Activated CD8-positive, alpha-beta T cell treated with anti-CD3 and anti-CD28 coated beads for 36 hours (primary cell): ENCODE measurements at regions of chr11 and their contacts with region 1.

Region 1: DNA sequence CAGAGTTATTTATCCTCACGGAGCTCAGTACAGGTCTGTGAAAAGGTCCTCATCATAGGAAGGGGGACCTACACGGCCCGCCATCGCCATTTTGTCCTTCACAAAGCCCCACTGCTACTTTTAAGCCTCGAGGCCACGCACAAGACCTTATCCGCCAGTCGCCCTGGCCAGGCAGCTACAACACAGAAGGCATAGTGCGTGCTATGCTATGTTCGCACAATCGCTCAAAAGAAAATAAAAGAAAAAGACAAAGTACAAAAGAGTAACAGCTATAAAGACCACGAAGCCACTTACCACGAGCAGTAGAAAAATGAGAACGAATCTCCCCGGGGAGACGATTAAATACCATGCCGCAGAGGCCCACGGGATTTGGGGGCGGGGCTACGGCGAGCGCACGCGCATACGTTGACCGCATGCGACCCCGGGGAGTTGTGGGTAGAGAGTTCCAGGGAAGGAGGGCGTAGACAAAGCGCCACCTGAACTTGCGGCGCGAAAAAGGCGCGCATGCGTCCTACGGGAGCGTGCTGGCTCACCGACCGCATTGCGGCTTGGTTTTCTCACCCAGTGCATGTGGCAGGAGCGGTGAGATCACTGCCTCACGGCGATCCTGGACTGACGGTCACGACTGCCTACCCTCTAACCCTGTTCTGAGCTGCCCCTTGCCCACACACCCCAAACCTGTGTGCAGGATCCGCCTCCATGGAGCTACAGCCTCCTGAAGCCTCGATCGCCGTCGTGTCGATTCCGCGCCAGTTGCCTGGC is 16.4 kb upstream of the WDR74 start:
- DNase-seq: peak; percentile 98
- ATAC-seq: peak; percentile 89
- H3K4me3 Mint-ChIP-seq: peak overlapping the region; percentile 95
- H3K27ac Mint-ChIP-seq: peak overlapping the region; percentile 95
- H3K4me1 Mint-ChIP-seq: peaks cover 46% of the 10 kb centered on the region
- H3K27me3 Mint-ChIP-seq: no peaks in the 10 kb centered on the region
- CTCF ChIP-seq: no peak

Region 2: DNA sequence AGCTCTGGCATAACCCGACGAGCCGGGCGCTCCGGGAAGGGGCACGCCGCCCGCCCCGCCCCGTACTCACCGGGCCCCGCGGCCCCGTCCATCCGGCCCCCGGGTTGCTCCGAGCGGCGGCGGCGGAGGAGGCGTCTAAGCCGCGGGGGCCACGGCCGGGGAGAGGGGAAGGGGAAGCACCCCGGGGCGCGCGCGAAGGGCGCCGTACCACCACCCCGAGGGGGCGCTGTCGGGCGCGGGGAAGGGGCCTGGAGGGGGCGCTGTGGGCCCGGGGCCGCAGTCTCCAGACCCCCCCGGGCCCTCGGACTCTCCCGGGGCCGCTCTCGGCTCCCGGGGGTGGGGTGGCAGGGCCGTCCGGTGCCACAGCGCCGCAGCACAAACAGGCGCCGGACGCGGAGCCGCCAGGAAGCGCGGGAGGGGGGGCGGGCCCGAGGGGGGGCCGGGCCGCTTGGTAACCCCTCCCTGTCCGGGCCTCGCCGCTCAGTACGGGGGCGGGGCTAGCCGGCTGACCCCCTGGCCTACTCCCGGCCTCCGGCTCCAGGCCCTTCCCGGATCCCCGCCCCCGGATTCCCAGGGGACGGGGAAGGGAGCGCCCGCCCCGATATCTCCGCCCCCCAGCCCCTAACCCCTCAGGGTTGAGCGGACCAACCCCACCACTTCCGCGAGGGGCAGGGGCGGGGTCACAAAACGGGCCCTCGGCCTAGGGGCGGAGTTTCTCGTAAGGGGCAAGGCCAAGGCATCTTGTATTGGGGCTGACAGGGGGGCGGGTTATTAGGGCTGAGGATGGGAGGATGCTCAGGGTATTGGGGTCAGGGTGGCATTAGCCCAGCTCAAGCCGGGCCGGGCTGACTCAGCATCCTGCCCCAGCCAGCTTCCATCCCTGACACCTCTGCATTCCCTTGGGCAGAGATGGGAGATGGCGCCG is 243.1 kb before region 1 on chr11 and contains the starts of genes EML3 and ROM1:
- CTCF ChIA-PET with region 1: no interaction called
- POLR2A ChIA-PET with region 1: interaction called, 18 read pairs
- intact Hi-C with region 1: no loop called
- DNase-seq: peak; percentile 92
- ATAC-seq: peak; percentile 80
- H3K4me3 Mint-ChIP-seq: peak within 1 kb of the TSS; percentile 96
- H3K27ac Mint-ChIP-seq: peak within 1 kb of the TSS; percentile 97
- H3K4me1 Mint-ChIP-seq: peaks cover 52% of the 10 kb centered on the region
- H3K27me3 Mint-ChIP-seq: no peaks in the 10 kb centered on the region
- CTCF ChIP-seq: peak; percentile 99
- total RNA-seq, gene EML3: 115 to 120 TPM
- total RNA-seq, gene ROM1: 0.79 to 1.1 TPM

Region 3: DNA sequence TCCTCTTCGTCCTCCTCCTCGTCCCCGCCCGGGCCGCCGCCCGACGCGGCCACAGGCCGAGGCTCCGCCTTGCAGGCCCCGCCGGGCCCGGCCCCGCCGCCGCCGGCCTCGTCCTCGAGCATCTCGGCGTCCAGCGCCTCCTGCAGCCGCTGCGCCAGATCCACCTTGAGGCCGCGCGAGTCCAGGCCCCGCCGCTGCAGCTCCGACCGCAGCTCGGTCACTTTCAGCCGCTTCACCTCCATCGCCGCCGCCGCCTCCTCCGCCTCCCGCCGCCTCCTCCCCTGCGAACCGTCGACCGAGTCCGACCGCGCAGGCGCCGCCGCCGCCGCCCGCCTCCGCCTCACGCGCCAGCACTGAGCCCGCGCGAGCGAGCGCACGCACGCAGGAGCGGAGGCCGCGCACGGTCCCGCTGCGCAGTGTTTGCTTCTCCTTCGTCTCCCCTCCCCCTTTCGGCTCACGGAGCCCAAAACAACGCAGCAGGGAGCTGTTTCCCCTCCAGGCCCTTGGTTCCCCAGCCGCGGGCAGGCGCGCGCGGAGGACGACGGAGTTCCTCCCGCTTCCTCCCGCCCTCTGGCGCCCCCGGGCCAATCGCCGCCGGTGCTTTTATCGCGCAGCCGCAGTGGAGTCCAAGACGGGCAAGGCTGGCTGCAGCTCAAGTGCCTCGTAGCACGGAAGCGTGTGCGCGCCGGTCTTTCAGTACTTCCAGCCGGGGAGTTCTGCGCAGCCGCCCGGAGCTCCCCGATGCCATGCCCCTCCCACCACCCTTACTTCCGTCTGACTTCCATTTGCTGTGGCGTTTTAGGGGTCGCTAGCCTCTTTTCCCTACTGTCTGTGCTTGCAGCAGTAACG is 128.6 kb before region 1 on chr11 and contains the start of gene HNRNPUL2:
- CTCF ChIA-PET with region 1: no interaction called
- POLR2A ChIA-PET with region 1: interaction called, 75 read pairs
- intact Hi-C with region 1: no loop called
- DNase-seq: peak; percentile 98
- ATAC-seq: peak; percentile 92
- H3K4me3 Mint-ChIP-seq: peak within 1 kb of the TSS; percentile 95
- H3K27ac Mint-ChIP-seq: peak within 1 kb of the TSS; percentile 99
- H3K4me1 Mint-ChIP-seq: peaks cover 43% of the 10 kb centered on the region
- H3K27me3 Mint-ChIP-seq: no peaks in the 10 kb centered on the region
- CTCF ChIP-seq: no peak
- total RNA-seq, gene HNRNPUL2: 54.9 to 58.6 TPM

Region 4: GRCh38 chr11:62777389-62777788 is 78.4 kb before region 1 on chr11:
- CTCF ChIA-PET with region 1: no interaction called
- POLR2A ChIA-PET with region 1: interaction called, 38 read pairs
- intact Hi-C with region 1: no loop called
- DNase-seq: peak; percentile 43
- ATAC-seq: peak; percentile 76
- H3K4me3 Mint-ChIP-seq: peak overlapping the region; percentile 1
- H3K27ac Mint-ChIP-seq: peak overlapping the region; percentile 85
- H3K4me1 Mint-ChIP-seq: peaks cover 16% of the 10 kb centered on the region
- H3K27me3 Mint-ChIP-seq: no peaks in the 10 kb centered on the region
- CTCF ChIP-seq: no peak

Region 5: GRCh38 chr11:62799486-62799885 is 56.3 kb before region 1 on chr11:
- CTCF ChIA-PET with region 1: no interaction called
- POLR2A ChIA-PET with region 1: interaction called, 88 read pairs
- intact Hi-C with region 1: no loop called
- DNase-seq: no peak
- ATAC-seq: no peak
- H3K4me3 Mint-ChIP-seq: no peak overlapping the region
- H3K27ac Mint-ChIP-seq: peak overlapping the region; percentile 34
- H3K4me1 Mint-ChIP-seq: peaks cover 36% of the 10 kb centered on the region
- H3K27me3 Mint-ChIP-seq: no peaks in the 10 kb centered on the region
- CTCF ChIP-seq: no peak

Region 6: GRCh38 chr11:62880803-62881578 is 25.2 kb after region 1 on chr11 and contains the start of gene SLC3A2:
- CTCF ChIA-PET with region 1: interaction called, 9 read pairs
- POLR2A ChIA-PET with region 1: interaction called, 495 read pairs
- intact Hi-C with region 1: loop called (anchors 1 kb)
- DNase-seq: peak; percentile 91
- ATAC-seq: peak; percentile 76
- H3K4me3 Mint-ChIP-seq: peak within 1 kb of the TSS; percentile 99
- H3K27ac Mint-ChIP-seq: peak within 1 kb of the TSS; percentile 100
- H3K4me1 Mint-ChIP-seq: peaks cover 41% of the 10 kb centered on the region
- H3K27me3 Mint-ChIP-seq: no peaks in the 10 kb centered on the region
- CTCF ChIP-seq: peak; percentile 71
- total RNA-seq, gene SLC3A2: 299 to 315 TPM